OCI-LY7 (cell line): ENCODE measurements at regions of chr11 and their contacts with region 1.

Region 1: DNA sequence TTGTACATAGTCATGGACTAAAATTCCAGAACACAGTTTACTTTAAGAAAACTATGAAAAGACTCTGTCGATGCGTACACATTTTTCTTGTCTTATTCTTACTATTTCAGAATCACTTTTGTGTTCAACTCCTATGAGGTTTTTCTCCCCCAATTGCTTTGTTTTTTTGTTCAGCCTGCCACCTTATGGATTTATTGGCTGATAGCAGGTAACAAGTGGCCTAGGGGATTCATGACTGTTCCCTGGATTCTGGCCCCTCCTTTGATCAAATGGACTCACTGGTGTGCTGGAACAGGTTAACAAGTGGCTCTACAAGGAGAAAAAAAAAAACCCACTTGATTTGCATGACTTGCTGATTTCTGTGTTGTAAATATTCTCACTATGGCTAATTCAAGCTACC is 10.6 kb downstream of the MMP20 start:
- DNase-seq: peak; percentile 23
- H3K4me3 ChIP-seq: no peak overlapping the region
- H3K27ac ChIP-seq: no peak overlapping the region
- H3K4me1 ChIP-seq: peaks cover 21% of the 10 kb centered on the region
- CTCF ChIP-seq: peak; percentile 68

Region 2: DNA sequence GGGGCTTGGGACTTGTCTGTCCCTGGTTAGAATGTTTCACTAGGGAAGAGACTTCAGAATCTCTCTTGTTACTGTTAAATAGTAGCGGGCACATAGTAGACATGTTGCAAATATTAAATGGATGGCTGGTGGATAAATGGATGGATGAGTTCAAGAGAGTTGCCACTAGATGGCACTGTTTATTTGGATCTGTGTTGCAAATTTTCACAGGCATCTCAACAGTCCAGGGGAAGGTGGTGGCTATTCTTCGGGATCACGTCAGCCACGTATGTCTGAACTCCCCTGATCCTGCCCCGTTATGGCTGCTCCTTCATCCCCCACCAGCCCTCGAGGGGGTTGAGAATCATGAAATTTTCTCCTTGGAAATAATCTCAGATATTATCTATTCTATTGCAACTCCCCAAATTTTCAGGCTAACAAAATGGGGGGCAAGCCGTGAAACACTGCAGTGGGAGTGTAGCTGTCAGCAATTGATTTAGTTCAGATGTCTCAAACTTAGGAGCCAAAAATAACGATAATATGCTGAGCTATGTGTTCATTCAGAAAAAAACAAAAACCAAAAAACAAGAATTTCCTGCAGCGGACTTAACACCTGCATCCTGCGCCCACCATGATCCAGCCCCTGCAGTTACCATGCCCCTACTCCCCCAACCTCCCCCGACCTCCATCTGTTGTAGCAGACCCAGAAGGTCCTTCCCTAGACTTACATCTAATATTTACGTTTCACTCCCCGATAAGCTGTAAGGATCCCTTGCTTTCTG is 326.3 kb before region 1 on chr11:
- CTCF ChIA-PET with region 1: interaction called, 4 read pairs
- POLR2A ChIA-PET with region 1: interaction called, 3 read pairs
- intact Hi-C with region 1: loop called (anchors 1 kb)
- DNase-seq: peak; percentile 86
- H3K4me3 ChIP-seq: peak overlapping the region; percentile 36
- H3K27ac ChIP-seq: no peak overlapping the region
- H3K4me1 ChIP-seq: peaks cover 26% of the 10 kb centered on the region
- CTCF ChIP-seq: peak; percentile 93

Region 3: DNA sequence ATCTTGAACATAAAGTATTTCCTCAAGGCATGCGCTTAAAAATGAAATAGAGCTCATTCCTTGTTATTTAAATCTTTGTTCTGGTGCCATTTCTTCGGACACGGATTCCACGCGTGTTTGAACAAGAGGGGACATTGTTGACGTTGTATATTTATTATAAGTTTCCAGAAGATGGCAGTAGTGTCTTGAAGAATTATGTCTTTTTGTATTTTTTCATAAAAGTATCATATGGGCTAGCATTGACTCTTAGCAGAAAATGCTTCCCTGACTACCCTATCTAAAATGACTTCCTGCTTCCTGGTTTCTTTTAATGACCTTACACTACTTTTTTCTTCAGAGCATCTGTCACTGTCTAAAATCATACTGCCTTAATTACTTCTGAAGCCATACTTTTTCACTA is 247.1 kb before region 1 on chr11:
- CTCF ChIA-PET with region 1: interaction called, 16 read pairs
- POLR2A ChIA-PET with region 1: interaction called, 9 read pairs
- intact Hi-C with region 1: loop called (anchors 5 kb)
- DNase-seq: peak; percentile 63
- H3K4me3 ChIP-seq: no peak overlapping the region
- H3K27ac ChIP-seq: no peak overlapping the region
- H3K4me1 ChIP-seq: peaks cover 6% of the 10 kb centered on the region
- CTCF ChIP-seq: peak; percentile 77

Region 4: DNA sequence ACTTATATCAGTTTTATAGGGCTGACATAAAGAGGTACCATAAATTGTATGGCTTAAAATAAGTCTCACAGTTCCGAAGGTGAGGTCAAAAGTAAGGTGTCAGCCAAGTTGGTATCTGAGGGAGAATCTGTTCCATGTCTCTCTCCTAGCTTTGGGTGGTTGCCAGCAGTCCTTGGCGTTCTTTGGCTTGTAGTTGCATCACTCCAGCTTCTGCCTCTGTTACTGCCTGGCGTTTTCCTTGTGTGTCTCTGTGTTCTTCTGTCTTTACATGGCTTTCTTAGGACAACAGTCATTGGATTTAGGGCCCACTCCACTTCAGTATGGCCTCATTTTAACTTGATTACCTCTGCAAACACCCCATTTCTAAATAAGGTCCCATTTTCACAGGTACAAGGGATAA is 100.6 kb before region 1 on chr11:
- CTCF ChIA-PET with region 1: no interaction called
- POLR2A ChIA-PET with region 1: no interaction called
- intact Hi-C with region 1: loop called (anchors 5 kb)
- DNase-seq: no peak
- H3K4me3 ChIP-seq: no peak overlapping the region
- H3K27ac ChIP-seq: no peak overlapping the region
- H3K4me1 ChIP-seq: no peaks in the 10 kb centered on the region
- CTCF ChIP-seq: no peak

Region 5: GRCh38 chr11:102603091-102603490 is 11.4 kb before region 1 on chr11:
- CTCF ChIA-PET with region 1: no interaction called
- POLR2A ChIA-PET with region 1: interaction called, 10 read pairs
- intact Hi-C with region 1: no loop called
- DNase-seq: no peak
- H3K4me3 ChIP-seq: no peak overlapping the region
- H3K27ac ChIP-seq: no peak overlapping the region
- H3K4me1 ChIP-seq: no peaks in the 10 kb centered on the region
- CTCF ChIP-seq: no peak